ENCODE measurements at regions of chr18 and their contacts with region 1.

Region 1: GRCh38 chr18:3245853-3246634 is 1.6 kb upstream of the MYL12A start:
- DNase-seq: peak; percentile 56 to 79 (median 72)
- ATAC-seq: peak; percentile 78
- H3K4me3 ChIP-seq: peak overlapping the region; percentile 97
- H3K4me3 Mint-ChIP-seq: peak overlapping the region; percentile 87 to 99 (median 97)
- H3K27ac ChIP-seq: peak overlapping the region; percentile 80
- H3K27ac Mint-ChIP-seq: peak overlapping the region; percentile 77 to 99 (median 97)
- H3K4me1 ChIP-seq: peaks cover 12 to 18% of the 10 kb centered on the region in 2 donors
- H3K4me1 Mint-ChIP-seq: peaks cover 19 to 34% (median 32%) of the 10 kb centered on the region in 7 donors
- H3K27me3 ChIP-seq: no peaks in the 10 kb centered on the region
- H3K27me3 Mint-ChIP-seq: peaks cover 0 to 2% (median 0%) of the 10 kb centered on the region in 5 donors

Region 2: GRCh38 chr18:2571200-2572143 is 674.6 kb before region 1 on chr18 and contains the starts of genes METTL4 and NDC80:
- CTCF ChIA-PET with region 1: no interaction called
- POLR2A ChIA-PET with region 1: no interaction called
- intact Hi-C with region 1: loop called (anchors 1 to 5 kb)
- DNase-seq: peak; percentile 70 to 90 (median 82)
- ATAC-seq: peak; percentile 87
- H3K4me3 ChIP-seq: peak within 1 kb of the TSS; percentile 88
- H3K4me3 Mint-ChIP-seq: peak within 1 kb of the TSS; percentile 96 to 100 (median 99)
- H3K27ac ChIP-seq: peak within 1 kb of the TSS; percentile 97
- H3K27ac Mint-ChIP-seq: peak within 1 kb of the TSS; percentile 98 to 100 (median 100)
- H3K4me1 ChIP-seq: peaks cover 10 to 13% of the 10 kb centered on the region in 2 donors
- H3K4me1 Mint-ChIP-seq: peaks cover 38 to 63% (median 59%) of the 10 kb centered on the region in 7 donors
- H3K27me3 ChIP-seq: no peaks in the 10 kb centered on the region
- H3K27me3 Mint-ChIP-seq: no peaks in the 10 kb centered on the region
- total RNA-seq, gene METTL4: 13.8 to 32.5 (median 22.8) TPM
- total RNA-seq, gene NDC80: 2.4 to 53.6 (median 2.7) TPM

Region 3: DNA sequence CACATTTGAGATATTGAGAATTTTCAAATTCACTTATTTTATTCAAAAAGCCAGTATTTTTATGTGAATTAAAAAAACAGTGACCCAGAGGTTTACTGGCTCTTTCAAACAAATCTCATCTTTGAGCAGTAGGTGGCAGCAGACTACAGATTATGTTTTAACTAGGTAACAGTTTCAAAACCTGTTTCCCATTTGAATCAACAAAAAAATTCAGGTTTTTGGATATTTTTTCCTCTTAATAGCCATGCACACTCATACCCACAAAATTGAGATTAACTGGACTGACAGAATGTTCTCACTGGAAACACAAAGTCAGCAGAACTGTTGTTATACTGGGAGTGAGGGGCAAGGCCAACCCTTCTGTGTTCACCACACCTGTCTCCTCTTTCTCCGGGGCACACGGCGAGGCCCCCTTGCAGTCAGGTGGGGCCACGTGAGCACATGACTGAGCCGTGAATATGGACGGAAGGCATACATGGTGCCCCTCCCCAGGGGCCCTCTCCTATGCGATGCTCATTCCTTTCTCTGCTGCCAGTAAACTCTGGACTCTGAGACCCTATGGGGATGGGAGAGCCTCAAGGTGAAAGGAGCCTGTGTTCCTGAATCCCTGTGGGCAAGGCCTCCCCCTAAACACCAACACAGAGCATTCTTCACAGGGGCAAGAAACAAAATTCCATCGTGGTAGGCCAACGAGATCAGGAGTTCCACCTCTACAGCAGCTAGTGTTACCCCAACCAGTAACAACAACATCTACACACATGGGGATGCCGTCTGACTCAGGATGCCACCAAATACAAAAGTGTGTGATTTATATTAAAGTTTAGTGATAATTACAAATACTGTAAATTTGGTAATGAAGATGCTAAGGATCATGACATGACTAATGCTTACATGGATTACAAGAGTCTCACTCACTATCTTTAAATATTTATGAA is 313.5 kb before region 1 on chr18:
- CTCF ChIA-PET with region 1: interaction called, 4 read pairs
- POLR2A ChIA-PET with region 1: interaction called, 4 read pairs
- intact Hi-C with region 1: loop called (anchors 1 kb)
- DNase-seq: peak in 7 of 9 donors; percentile 60 to 79 (median 73)
- ATAC-seq: peak; percentile 84
- H3K4me3 ChIP-seq: no peak overlapping the region
- H3K4me3 Mint-ChIP-seq: peak overlapping the region in 8 of 10 donors; percentile 1 to 30 (median 10)
- H3K27ac ChIP-seq: peak overlapping the region; percentile 49
- H3K27ac Mint-ChIP-seq: peak overlapping the region; percentile 68 to 95 (median 89)
- H3K4me1 ChIP-seq: peaks cover 7 to 8% of the 10 kb centered on the region in 2 donors
- H3K4me1 Mint-ChIP-seq: peaks cover 14 to 49% (median 33%) of the 10 kb centered on the region in 7 donors
- H3K27me3 ChIP-seq: no peaks in the 10 kb centered on the region
- H3K27me3 Mint-ChIP-seq: no peaks in the 10 kb centered on the region

Region 4: GRCh38 chr18:3012964-3013804 is 232.9 kb before region 1 on chr18 and contains the start of gene LPIN2:
- CTCF ChIA-PET with region 1: no interaction called
- POLR2A ChIA-PET with region 1: interaction called, 6 read pairs
- intact Hi-C with region 1: loop called (anchors 1 kb)
- DNase-seq: peak; percentile 96 to 98 (median 98)
- ATAC-seq: peak; percentile 92
- H3K4me3 ChIP-seq: peak within 1 kb of the TSS; percentile 61
- H3K4me3 Mint-ChIP-seq: peak within 1 kb of the TSS; percentile 93 to 99 (median 95)
- H3K27ac ChIP-seq: peak within 1 kb of the TSS; percentile 84
- H3K27ac Mint-ChIP-seq: peak within 1 kb of the TSS; percentile 91 to 98 (median 95)
- H3K4me1 ChIP-seq: peaks cover 8 to 61% of the 10 kb centered on the region in 2 donors
- H3K4me1 Mint-ChIP-seq: peaks cover 56 to 79% (median 74%) of the 10 kb centered on the region in 7 donors
- H3K27me3 ChIP-seq: no peaks in the 10 kb centered on the region
- H3K27me3 Mint-ChIP-seq: no peaks in the 10 kb centered on the region
- total RNA-seq, gene LPIN2: 58.8 to 133 (median 73.6) TPM

Region 5: GRCh38 chr18:3151399-3152264 is 94.4 kb before region 1 on chr18:
- CTCF ChIA-PET with region 1: interaction called, 9 read pairs
- POLR2A ChIA-PET with region 1: interaction called, 5 read pairs
- intact Hi-C with region 1: loop called (anchors 1 kb)
- DNase-seq: peak in 7 of 9 donors; percentile 12 to 50 (median 31)
- ATAC-seq: peak; percentile 45
- H3K4me3 ChIP-seq: no peak overlapping the region
- H3K4me3 Mint-ChIP-seq: no peak overlapping the region
- H3K27ac ChIP-seq: no peak overlapping the region
- H3K27ac Mint-ChIP-seq: peak overlapping the region in 2 of 9 donors; percentile 23 to 34
- H3K4me1 ChIP-seq: peaks cover 0 to 3% of the 10 kb centered on the region in 2 donors
- H3K4me1 Mint-ChIP-seq: peaks cover 3 to 12% (median 7%) of the 10 kb centered on the region in 7 donors
- H3K27me3 ChIP-seq: no peaks in the 10 kb centered on the region
- H3K27me3 Mint-ChIP-seq: peaks cover 0 to 8% (median 0%) of the 10 kb centered on the region in 5 donors

Region 6: GRCh38 chr18:3205239-3205638 is 40.8 kb before region 1 on chr18:
- CTCF ChIA-PET with region 1: no interaction called
- POLR2A ChIA-PET with region 1: no interaction called
- intact Hi-C with region 1: no loop called
- DNase-seq: no peak
- ATAC-seq: no peak
- H3K4me3 ChIP-seq: no peak overlapping the region
- H3K4me3 Mint-ChIP-seq: no peak overlapping the region
- H3K27ac ChIP-seq: no peak overlapping the region
- H3K27ac Mint-ChIP-seq: no peak overlapping the region
- H3K4me1 ChIP-seq: no peaks in the 10 kb centered on the region
- H3K4me1 Mint-ChIP-seq: peaks cover 0 to 2% (median 0%) of the 10 kb centered on the region in 7 donors
- H3K27me3 ChIP-seq: no peaks in the 10 kb centered on the region
- H3K27me3 Mint-ChIP-seq: peaks cover 0 to 10% (median 0%) of the 10 kb centered on the region in 5 donors

Region 7: GRCh38 chr18:3297025-3297984 is 51.3 kb after region 1 on chr18:
- CTCF ChIA-PET with region 1: interaction called, 3 read pairs
- POLR2A ChIA-PET with region 1: interaction called, 10 read pairs
- intact Hi-C with region 1: loop called (anchors 1 kb)
- DNase-seq: peak; percentile 74 to 93 (median 90)
- ATAC-seq: peak; percentile 100
- H3K4me3 ChIP-seq: peak overlapping the region; percentile 60
- H3K4me3 Mint-ChIP-seq: peak overlapping the region; percentile 89 to 98 (median 95)
- H3K27ac ChIP-seq: peak overlapping the region; percentile 62
- H3K27ac Mint-ChIP-seq: peak overlapping the region; percentile 21 to 93 (median 84)
- H3K4me1 ChIP-seq: peaks cover 6 to 9% of the 10 kb centered on the region in 2 donors
- H3K4me1 Mint-ChIP-seq: peaks cover 0 to 16% (median 10%) of the 10 kb centered on the region in 7 donors
- H3K27me3 ChIP-seq: no peaks in the 10 kb centered on the region
- H3K27me3 Mint-ChIP-seq: peaks cover 13 to 41% (median 30%) of the 10 kb centered on the region in 5 donors

Region 8: GRCh38 chr18:3665780-3666525 is 419.9 kb after region 1 on chr18:
- CTCF ChIA-PET with region 1: interaction called, 8 read pairs
- POLR2A ChIA-PET with region 1: interaction called, 3 read pairs
- intact Hi-C with region 1: loop called in 1 of 2 experiments (anchors 1 kb)
- DNase-seq: peak; percentile 33 to 78 (median 60)
- ATAC-seq: peak; percentile 84
- H3K4me3 ChIP-seq: no peak overlapping the region
- H3K4me3 Mint-ChIP-seq: peak overlapping the region in 9 of 10 donors; percentile 38 to 62 (median 50)
- H3K27ac ChIP-seq: no peak overlapping the region
- H3K27ac Mint-ChIP-seq: peak overlapping the region in 2 of 9 donors; percentile 31 to 84
- H3K4me1 ChIP-seq: no peaks in the 10 kb centered on the region
- H3K4me1 Mint-ChIP-seq: peaks cover 0 to 26% (median 8%) of the 10 kb centered on the region in 7 donors
- H3K27me3 ChIP-seq: no peaks in the 10 kb centered on the region
- H3K27me3 Mint-ChIP-seq: peaks cover 0 to 5% (median 0%) of the 10 kb centered on the region in 5 donors

Measured in naive thymus-derived CD4-positive, alpha-beta T cell (primary cell).